Mammary epithelial cell (primary cell): ENCODE measurements at regions of chr5 and their contacts with region 1.

Region 1: GRCh38 chr5:95858661-95859326 is 36.3 kb upstream of the GLRX start:
- DNase-seq: peak; percentile 97
- H3K4me3 ChIP-seq: peak overlapping the region; percentile 10 to 48 (median 31)
- H3K27ac ChIP-seq: peak overlapping the region; percentile 93
- H3K4me1 ChIP-seq: peaks cover 23% of the 10 kb centered on the region
- H3K27me3 ChIP-seq: no peaks in the 10 kb centered on the region
- CTCF ChIP-seq: peak; percentile 93 to 99

Region 2: DNA sequence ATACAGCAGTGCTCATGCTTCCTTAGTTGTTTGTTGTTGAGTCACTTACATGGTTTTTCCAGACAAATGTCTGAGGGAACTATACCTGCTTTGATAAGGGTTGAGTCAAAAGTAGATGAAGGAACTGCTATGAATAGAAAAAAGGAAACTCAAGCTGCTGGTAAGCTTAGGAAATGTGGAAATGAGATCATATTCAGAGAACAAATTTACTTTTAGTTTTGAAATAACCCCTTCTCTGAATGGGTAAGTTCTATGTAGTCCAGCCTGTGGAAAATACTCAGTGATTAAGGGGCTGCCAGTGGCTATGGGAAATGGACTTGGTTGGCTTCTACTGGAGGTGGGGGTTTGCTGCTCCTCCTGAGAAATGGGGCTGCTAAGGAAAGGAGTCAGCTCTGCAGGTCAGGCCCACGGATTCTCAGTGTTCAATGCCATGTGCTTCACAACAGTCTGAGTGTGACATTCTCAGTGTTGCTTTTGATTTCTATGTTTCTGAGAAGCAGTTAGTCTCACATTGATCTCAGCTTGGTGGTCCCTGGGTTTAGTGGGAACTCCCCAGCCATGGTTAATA is 11.4 kb after region 1 on chr5:
- CTCF ChIA-PET with region 1: no interaction called
- dilution Hi-C with region 1: no loop called
- in situ Hi-C with region 1: no loop called
- intact Hi-C with region 1: no loop called
- DNase-seq: peak; percentile 87
- H3K4me3 ChIP-seq: no peak overlapping the region
- H3K27ac ChIP-seq: peak overlapping the region; percentile 19
- H3K4me1 ChIP-seq: peaks cover 4% of the 10 kb centered on the region
- H3K27me3 ChIP-seq: no peaks in the 10 kb centered on the region
- CTCF ChIP-seq: no peak

Region 3: DNA sequence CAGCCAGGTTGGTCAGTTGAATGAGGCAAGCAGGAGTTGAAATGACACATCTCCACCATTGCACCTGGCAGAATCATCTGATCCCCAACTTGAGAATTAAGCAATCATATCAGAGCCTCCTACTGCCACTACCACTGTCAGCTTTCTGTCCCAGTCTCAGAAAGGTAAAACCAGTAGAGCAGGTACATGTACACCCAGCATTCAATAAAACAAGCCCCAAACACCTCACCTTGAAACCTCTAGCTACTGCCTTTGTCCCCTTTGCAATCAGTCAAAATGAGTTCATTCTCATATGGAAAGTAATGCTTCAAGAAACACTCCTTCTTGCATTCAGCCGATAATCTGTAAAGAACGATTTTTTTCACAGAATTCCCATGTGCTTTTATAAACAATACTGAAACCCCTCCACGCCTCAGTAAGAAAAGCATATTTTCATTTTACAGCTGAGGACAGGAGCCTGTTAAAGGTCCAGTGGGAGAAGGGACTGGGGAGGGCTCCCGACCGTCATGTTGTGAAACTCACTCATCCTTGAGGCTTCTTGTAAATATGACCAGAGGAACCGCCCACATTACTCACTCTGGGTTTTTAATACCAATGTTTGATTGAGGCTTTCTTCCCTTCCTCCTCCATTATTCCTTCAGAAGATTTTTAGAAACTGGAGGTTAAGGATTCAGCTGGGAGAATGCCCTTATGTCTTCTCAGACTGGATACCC is 25.0 kb after region 1 on chr5:
- CTCF ChIA-PET with region 1: no interaction called
- dilution Hi-C with region 1: no loop called
- in situ Hi-C with region 1: no loop called
- intact Hi-C with region 1: no loop called
- DNase-seq: peak; percentile 61
- H3K4me3 ChIP-seq: no peak overlapping the region
- H3K27ac ChIP-seq: no peak overlapping the region
- H3K4me1 ChIP-seq: no peaks in the 10 kb centered on the region
- H3K27me3 ChIP-seq: no peaks in the 10 kb centered on the region
- CTCF ChIP-seq: no peak

Region 4: GRCh38 chr5:96113170-96113939 is 254.6 kb after region 1 on chr5:
- CTCF ChIA-PET with region 1: no interaction called
- dilution Hi-C with region 1: no loop called
- in situ Hi-C with region 1: no loop called
- intact Hi-C with region 1: loop called (anchors 5 kb)
- DNase-seq: peak; percentile 89
- H3K4me3 ChIP-seq: peak overlapping the region in 2 of 3 experiments; percentile 8
- H3K27ac ChIP-seq: peak overlapping the region; percentile 88
- H3K4me1 ChIP-seq: peaks cover 47% of the 10 kb centered on the region
- H3K27me3 ChIP-seq: no peaks in the 10 kb centered on the region
- CTCF ChIP-seq: no peak

Region 5: DNA sequence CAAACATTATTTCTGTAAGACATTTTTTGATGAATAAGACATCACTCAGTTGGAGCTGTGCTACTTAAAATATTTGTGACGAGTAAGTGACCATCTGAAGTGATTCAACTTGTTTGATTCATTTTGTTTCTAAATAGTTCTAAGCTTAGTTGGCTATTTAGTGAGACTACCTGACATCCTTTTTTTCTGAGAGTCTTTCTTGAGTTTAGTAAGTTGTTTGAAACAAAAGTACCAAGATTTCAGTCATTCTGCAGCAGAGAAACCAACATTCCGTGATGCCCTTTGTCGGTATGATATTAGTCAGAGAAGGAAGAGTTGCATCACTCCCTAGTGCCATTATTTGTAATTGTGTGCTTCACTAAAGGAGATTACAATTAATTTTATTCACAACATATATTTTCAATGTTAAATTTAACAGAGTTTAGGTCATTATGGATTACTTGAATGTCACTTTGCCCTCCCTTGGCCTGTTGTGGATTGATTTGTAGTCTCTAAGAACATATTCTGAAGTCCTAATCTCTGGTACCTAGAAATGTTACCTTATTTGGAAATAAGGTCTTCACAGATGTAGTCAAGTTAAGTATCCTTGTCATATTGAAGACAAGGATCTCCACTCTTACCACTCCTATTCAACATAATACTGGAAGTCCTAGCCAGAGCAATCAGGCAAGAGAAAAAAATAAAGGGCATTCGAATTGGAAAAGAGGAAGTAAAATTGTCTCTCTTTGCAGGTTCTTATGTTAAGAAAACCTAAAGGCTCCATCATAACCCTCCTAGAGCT is 362.0 kb after region 1 on chr5:
- CTCF ChIA-PET with region 1: no interaction called
- dilution Hi-C with region 1: no loop called
- in situ Hi-C with region 1: no loop called
- intact Hi-C with region 1: loop called (anchors 2 kb)
- DNase-seq: peak; percentile 88
- H3K4me3 ChIP-seq: peak overlapping the region in 1 of 3 experiments; percentile 14
- H3K27ac ChIP-seq: peak overlapping the region; percentile 95
- H3K4me1 ChIP-seq: peaks cover 25% of the 10 kb centered on the region
- H3K27me3 ChIP-seq: no peaks in the 10 kb centered on the region
- CTCF ChIP-seq: no peak

Region 6: DNA sequence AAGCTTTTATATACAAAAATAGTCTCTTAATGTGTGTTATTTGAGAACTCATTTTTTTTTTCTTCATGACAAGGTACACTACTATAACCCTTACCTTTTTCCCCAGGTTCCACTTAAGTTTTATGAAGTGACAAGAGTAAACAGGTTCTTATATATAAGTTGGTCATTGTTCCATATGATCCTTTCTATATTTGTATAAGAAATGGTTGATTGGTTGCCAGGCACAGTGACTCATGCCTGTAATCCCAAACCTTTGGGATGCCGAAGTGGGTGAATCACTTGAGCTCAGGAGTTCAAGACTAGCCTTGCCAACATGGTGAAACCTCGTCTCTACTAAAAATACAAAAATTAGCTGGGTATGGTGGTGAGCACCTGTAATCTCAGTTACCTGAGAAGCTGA is 465.9 kb after region 1 on chr5:
- CTCF ChIA-PET with region 1: no interaction called
- dilution Hi-C with region 1: no loop called
- in situ Hi-C with region 1: loop called in 1 of 2 experiments (anchors 10 kb)
- intact Hi-C with region 1: no loop called
- DNase-seq: peak; percentile 87
- H3K4me3 ChIP-seq: no peak overlapping the region
- H3K27ac ChIP-seq: peak overlapping the region; percentile 66
- H3K4me1 ChIP-seq: peaks cover 26% of the 10 kb centered on the region
- H3K27me3 ChIP-seq: no peaks in the 10 kb centered on the region
- CTCF ChIP-seq: no peak

Region 7: GRCh38 chr5:96595300-96596090 is 736.7 kb after region 1 on chr5:
- CTCF ChIA-PET with region 1: no interaction called
- dilution Hi-C with region 1: no loop called
- in situ Hi-C with region 1: loop called (anchors 10 to 25 kb)
- intact Hi-C with region 1: no loop called
- DNase-seq: peak; percentile 23
- H3K4me3 ChIP-seq: no peak overlapping the region
- H3K27ac ChIP-seq: no peak overlapping the region
- H3K4me1 ChIP-seq: no peaks in the 10 kb centered on the region
- H3K27me3 ChIP-seq: peaks cover 8% of the 10 kb centered on the region
- CTCF ChIP-seq: peak; percentile 50 to 63

Region 8: GRCh38 chr5:96687812-96688453 is 829.1 kb after region 1 on chr5:
- CTCF ChIA-PET with region 1: no interaction called
- dilution Hi-C with region 1: no loop called
- in situ Hi-C with region 1: no loop called
- intact Hi-C with region 1: loop called (anchors 10 kb)
- DNase-seq: no peak
- H3K4me3 ChIP-seq: no peak overlapping the region
- H3K27ac ChIP-seq: no peak overlapping the region
- H3K4me1 ChIP-seq: peaks cover 28% of the 10 kb centered on the region
- H3K27me3 ChIP-seq: no peaks in the 10 kb centered on the region
- CTCF ChIP-seq: peak; percentile 71 to 73